ENCODE measurements at regions of chr14 and their contacts with region 1.

Region 1: GRCh38 chr14:90003908-90004307 is 48.2 kb downstream of the TDP1 start:
- DNase-seq: no peak
- H3K4me3 Mint-ChIP-seq: no peak overlapping the region
- H3K27ac Mint-ChIP-seq: peak overlapping the region; percentile 28
- H3K4me1 Mint-ChIP-seq: peaks cover 19% of the 10 kb centered on the region
- H3K27me3 Mint-ChIP-seq: no peaks in the 10 kb centered on the region

Region 2: GRCh38 chr14:89787525-89787924 is 216.4 kb before region 1 on chr14:
- intact Hi-C with region 1: no loop called
- DNase-seq: no peak
- H3K4me3 Mint-ChIP-seq: no peak overlapping the region
- H3K27ac Mint-ChIP-seq: no peak overlapping the region
- H3K4me1 Mint-ChIP-seq: no peaks in the 10 kb centered on the region
- H3K27me3 Mint-ChIP-seq: peaks cover 5% of the 10 kb centered on the region

Region 3: GRCh38 chr14:89959853-89960445 is 44.0 kb before region 1 on chr14:
- intact Hi-C with region 1: loop called (anchors 5 kb)
- DNase-seq: no peak
- H3K4me3 Mint-ChIP-seq: peak overlapping the region; percentile 40
- H3K27ac Mint-ChIP-seq: peak overlapping the region; percentile 91
- H3K4me1 Mint-ChIP-seq: peaks cover 69% of the 10 kb centered on the region
- H3K27me3 Mint-ChIP-seq: no peaks in the 10 kb centered on the region

Measured in activated T-helper 1 cell treated with anti-CD3 and anti-CD28 coated beads, Interleukin-12 subunit alpha, Interleukin-12 subunit beta, Interleukin-2, Interleukin-4 antibody, amounts not matched to agents 30 ng/mL and 10 ng/mL and 1 ng/mL, durations not matched to agents 14 hours and 24 hours and 36 hours (primary cell).